ENCODE measurements at regions of chr20 and their contacts with region 1.

Region 1: DNA sequence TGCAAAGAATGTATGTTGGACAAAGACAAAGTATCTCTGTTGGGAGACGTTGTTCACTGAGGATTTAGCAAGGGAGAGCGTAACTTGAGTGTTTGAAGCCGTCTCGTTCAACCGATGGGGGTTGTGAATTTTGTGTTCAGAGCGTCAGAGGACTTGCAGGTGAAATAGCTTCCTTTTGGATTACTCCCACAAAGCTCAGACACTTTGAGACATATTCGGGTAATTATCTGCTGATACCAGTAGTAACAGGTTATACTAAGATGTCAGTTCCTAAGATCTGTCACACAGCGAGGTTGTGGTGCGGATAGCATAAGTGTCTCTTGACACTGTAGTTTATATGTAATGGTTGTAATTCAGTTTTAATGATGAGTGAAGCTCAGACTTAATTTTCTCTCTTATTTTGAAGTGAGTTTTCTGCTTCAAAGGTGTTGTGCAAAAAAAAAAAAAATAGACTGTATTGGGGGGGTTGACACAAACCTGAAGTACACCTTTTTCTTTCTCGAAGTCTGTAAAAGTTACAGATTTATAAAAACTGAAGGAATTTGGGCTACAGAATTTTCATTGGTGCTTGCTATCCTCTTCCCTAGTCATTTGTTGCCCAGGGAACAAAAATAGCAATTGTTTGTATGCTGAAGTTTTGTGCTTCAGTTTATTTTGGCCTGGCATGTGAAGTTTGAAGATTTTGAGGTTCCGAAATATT is 1.7 kb downstream of the ASXL1 start:
- DNase-seq: no peak
- ATAC-seq: no peak

Region 2: DNA sequence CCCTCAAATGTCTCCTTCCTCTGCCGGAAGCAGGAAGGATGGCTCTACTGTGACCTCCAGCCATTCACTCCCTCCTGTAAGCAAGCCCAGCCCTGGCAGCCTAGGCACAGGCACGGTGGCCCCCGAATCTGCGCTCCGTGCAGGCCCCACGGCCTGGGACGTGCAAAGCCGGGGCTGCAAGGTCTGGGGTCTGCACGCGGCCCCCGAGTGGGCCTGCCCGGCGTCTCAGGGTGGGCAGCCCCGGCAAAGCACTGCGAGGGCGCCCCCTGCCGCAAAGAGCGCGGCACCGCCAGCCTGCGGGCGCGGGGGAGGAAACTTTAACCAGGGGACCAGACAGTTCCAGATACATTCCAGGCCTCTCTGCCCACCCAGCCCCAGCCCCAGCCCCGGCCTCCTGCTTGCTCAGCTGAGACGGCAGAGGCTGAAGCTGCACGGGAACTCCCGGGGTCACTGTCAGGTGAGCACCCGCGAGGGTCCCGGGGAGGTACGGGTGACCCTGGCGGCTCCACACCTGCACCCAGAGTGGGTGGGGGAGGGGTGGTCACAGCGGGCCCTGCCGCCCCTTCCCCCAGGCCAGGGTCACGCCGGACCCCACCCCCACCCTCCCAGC is 97.2 kb after region 1 on chr20:
- intact Hi-C with region 1: loop called (anchors 10 kb)
- DNase-seq: no peak
- ATAC-seq: peak; percentile 63

Measured in sciatic nerve (tissue), 2 donors.